MCF 10A (cell line): ENCODE measurements at regions of chr1 and their contacts with region 1.

Region 1: DNA sequence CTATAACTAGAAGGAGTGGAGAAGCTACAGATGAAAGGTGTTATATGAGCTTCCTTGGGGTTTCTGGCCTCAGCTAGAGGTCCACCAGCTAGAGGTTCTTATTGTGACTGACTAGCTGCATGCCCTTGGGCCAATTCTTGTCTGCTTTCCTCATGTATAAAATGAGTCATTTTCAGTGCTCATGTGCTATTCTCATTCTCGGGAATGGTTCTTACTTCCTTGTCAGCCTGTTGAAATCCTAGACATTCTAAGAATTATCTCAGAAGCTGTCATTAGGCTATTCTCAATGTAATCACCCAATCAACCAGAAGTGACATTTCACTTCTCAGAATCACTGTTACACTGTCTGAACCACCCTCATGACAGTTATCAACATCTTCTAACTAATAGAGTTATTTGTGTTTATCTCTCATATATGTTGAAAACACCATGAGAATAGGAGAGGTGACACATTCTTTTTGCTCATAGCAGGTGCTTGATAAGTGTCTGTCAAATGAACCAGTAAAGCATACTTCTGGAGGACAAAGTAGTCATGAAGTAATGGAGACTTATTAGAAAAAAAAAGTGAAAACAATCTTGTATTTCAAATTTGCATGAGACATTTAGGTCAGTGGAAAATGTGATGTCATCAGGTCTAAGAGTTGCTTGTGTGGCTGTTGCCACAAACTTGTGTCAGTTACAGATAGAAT is 122.8 kb upstream of the IVNS1ABP start:
- DNase-seq: peak; percentile 95
- H3K4me3 Mint-ChIP-seq: no peak overlapping the region
- H3K27ac Mint-ChIP-seq: no peak overlapping the region
- H3K4me1 Mint-ChIP-seq: peaks cover 10% of the 10 kb centered on the region
- H3K27me3 Mint-ChIP-seq: no peaks in the 10 kb centered on the region
- CTCF ChIP-seq: no peak

Region 2: DNA sequence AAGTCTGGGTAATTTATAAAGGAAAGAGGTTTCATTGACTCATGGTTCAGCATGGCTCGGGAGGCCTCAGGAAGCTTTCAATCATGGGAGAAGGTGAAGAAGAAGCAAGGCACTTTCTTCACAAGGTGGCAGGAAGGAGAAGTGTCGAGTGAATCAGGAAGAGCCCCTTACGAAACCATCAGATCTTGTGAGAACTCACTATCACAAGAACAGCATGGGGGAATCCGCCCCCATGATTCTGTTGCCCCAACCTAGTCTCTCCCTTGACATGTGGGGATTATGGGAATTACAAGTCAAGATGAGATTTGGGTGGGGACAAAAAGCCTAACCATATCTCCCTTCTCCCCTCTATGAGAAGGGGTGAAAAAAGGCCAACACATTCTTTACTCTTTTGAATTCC is 111.6 kb before region 1 on chr1:
- CTCF ChIA-PET with region 1: no interaction called
- POLR2A ChIA-PET with region 1: no interaction called
- intact Hi-C with region 1: no loop called
- DNase-seq: no peak
- H3K4me3 Mint-ChIP-seq: no peak overlapping the region
- H3K27ac Mint-ChIP-seq: no peak overlapping the region
- H3K4me1 Mint-ChIP-seq: no peaks in the 10 kb centered on the region
- H3K27me3 Mint-ChIP-seq: no peaks in the 10 kb centered on the region
- CTCF ChIP-seq: no peak

Region 3: DNA sequence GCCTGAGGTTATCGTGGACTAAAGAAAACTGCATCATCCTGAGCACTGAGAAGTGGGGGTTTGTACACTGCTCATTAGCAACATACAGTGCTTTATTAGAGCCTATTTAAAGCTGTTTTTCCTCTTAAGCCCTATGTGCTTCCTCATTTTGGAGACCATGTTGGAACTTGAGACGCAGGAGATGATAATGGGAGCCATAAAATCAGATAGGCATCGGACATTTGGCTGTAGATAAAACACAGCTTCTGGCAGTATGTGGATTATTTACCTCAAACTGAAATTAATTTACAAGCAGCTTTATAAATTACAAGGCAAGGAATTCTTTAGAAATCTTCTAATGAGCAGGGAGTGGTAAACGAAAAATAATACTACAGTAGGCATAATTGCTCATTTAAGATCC is 24.9 kb after region 1 on chr1:
- CTCF ChIA-PET with region 1: no interaction called
- POLR2A ChIA-PET with region 1: no interaction called
- intact Hi-C with region 1: no loop called
- DNase-seq: no peak
- H3K4me3 Mint-ChIP-seq: no peak overlapping the region
- H3K27ac Mint-ChIP-seq: peak overlapping the region; percentile 17
- H3K4me1 Mint-ChIP-seq: no peaks in the 10 kb centered on the region
- H3K27me3 Mint-ChIP-seq: no peaks in the 10 kb centered on the region
- CTCF ChIP-seq: no peak

Region 4: DNA sequence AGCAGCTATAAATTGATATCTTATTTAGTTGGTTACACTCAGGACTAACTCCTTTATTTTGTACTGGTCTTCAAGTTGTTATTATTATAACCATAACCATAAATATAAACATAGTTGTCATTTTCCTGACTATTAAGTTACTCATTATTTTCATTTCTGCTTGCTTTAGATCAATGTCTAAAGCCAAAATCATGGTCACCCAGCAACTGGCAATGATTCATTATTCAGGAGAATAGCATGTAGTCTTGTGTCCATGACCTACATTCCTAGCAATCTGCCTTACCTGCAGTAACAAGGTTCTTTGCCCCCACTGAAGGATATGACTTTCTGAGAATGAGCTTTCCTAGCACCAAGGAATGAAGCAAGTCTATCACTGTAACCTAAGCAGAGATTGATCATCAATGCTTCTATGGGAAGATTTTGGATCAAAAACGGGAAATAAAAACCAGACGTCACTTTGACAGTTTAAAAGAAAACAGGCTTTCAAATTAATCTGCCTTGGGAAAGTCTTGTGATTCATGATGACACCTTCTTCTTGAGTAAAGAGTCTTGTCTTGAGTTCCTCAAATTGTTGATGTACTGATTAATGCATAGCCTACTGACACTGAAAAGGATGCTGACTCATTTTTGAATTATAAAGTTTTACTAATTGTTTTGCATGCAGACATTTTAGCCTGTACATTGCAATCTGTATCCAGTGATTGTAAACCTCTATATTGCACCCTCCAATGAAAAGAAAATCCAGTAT is 80.5 kb after region 1 on chr1:
- CTCF ChIA-PET with region 1: no interaction called
- POLR2A ChIA-PET with region 1: interaction called, 3 read pairs
- intact Hi-C with region 1: loop called (anchors 10 kb)
- DNase-seq: peak; percentile 30
- H3K4me3 Mint-ChIP-seq: no peak overlapping the region
- H3K27ac Mint-ChIP-seq: peak overlapping the region; percentile 68
- H3K4me1 Mint-ChIP-seq: peaks cover 12% of the 10 kb centered on the region
- H3K27me3 Mint-ChIP-seq: no peaks in the 10 kb centered on the region
- CTCF ChIP-seq: no peak

Region 5: GRCh38 chr1:185864889-185865288 is 425.0 kb after region 1 on chr1:
- CTCF ChIA-PET with region 1: no interaction called
- POLR2A ChIA-PET with region 1: no interaction called
- intact Hi-C with region 1: no loop called
- DNase-seq: peak; percentile 39
- H3K4me3 Mint-ChIP-seq: no peak overlapping the region
- H3K27ac Mint-ChIP-seq: peak overlapping the region; percentile 28
- H3K4me1 Mint-ChIP-seq: peaks cover 15% of the 10 kb centered on the region
- H3K27me3 Mint-ChIP-seq: no peaks in the 10 kb centered on the region
- CTCF ChIP-seq: no peak